Posterior cingulate gyrus (tissue), 11 donors: ENCODE measurements at regions of chr3 and their contacts with region 1.

Region 1: DNA sequence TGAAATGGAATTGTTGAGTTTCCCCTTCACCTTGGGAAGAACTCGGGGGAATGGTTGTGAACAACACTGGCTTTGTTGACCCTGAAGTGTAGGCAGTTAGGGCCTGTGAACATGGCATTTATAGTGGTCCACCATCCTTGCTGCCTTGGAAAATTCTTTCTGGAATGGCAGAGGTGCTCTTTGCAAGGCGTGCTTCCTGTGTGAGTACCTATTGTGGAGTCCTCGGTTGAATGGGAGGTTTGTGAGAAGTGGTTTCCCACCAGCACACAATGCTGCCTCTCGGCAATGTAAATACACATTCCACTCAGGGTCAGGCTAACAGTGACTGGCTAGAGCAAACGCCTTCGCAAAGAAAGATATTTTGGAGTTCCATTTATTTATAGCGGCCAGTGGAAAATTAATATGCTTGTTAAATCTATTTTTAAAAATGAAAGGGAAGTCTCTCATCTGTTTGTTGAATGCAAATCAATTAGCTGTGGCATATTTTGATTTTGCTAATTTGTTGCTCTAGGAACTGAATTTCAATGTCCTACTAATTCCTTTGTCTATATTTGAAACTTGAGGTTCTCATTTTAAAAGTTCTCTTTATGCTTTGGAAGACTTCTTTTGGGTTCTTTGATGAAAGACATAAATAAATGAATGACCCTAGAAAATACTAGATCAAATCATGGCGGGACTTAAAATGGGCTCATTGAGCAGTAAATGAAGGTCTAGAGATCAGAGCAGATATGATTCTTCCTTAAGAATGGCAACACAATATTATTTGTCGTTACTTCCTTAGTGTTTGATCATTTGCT is 59.5 kb downstream of the FNDC3B start:
- DNase-seq: no peak

Region 2: GRCh38 chr3:172171396-172172075 is 72.6 kb after region 1 on chr3:
- intact Hi-C with region 1: loop called (anchors 2 kb)
- DNase-seq: no peak

Region 3: GRCh38 chr3:172270557-172271166 is 171.8 kb after region 1 on chr3:
- intact Hi-C with region 1: no loop called
- DNase-seq: no peak